OCI-LY7 (cell line): ENCODE measurements at regions of chr5 and their contacts with region 1.

Region 1: DNA sequence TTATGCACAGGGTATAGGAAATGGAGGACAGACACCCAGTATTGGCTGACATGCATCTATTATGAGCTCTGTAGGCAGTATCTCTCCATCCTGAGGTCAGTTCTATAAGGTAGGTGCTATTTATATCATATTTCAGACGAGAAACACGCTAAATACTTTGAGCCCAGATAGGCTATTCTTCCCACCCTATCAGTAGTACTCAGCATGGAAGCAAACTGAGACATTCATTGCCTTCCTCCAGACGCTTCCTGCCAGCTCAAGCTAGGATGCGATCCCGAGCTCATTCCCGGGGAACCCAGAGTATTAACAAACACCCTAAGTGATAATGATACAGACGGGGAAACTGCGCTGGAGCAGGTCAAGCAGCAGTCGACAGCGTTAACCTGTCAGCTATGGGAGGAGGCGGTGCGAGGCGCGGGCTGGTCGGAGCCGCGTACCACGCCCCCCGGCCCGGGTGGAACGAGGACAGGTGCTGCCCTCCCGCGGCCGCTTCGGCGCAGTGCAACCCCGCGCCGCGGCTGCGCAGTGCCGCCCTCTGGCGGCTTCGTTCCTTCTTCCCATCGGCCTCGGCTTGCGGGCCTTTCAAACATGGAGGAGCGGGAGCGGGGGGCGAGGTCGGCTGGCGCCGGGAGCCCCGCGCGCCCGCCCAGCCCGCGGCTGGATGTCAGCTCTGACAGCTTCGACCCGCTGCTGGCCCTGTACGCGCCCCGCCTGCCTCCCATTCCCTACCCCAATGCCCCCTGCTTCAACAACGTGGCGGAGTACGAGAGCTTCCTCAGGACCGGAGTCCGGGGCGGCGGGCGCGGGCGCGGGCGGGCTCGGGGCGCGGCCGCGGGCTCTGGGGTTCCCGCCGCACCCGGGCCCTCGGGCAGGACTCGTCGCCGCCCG is at the start of gene LSM11:
- DNase-seq: peak; percentile 91
- H3K4me3 ChIP-seq: peak within 1 kb of the TSS; percentile 98
- H3K27ac ChIP-seq: no peak within 1 kb of the TSS
- H3K4me1 ChIP-seq: peaks cover 22% of the 10 kb centered on the region
- CTCF ChIP-seq: peak; percentile 98
- total RNA-seq, gene LSM11: 7.5 and 8.8 TPM in 2 replicates

Region 2: DNA sequence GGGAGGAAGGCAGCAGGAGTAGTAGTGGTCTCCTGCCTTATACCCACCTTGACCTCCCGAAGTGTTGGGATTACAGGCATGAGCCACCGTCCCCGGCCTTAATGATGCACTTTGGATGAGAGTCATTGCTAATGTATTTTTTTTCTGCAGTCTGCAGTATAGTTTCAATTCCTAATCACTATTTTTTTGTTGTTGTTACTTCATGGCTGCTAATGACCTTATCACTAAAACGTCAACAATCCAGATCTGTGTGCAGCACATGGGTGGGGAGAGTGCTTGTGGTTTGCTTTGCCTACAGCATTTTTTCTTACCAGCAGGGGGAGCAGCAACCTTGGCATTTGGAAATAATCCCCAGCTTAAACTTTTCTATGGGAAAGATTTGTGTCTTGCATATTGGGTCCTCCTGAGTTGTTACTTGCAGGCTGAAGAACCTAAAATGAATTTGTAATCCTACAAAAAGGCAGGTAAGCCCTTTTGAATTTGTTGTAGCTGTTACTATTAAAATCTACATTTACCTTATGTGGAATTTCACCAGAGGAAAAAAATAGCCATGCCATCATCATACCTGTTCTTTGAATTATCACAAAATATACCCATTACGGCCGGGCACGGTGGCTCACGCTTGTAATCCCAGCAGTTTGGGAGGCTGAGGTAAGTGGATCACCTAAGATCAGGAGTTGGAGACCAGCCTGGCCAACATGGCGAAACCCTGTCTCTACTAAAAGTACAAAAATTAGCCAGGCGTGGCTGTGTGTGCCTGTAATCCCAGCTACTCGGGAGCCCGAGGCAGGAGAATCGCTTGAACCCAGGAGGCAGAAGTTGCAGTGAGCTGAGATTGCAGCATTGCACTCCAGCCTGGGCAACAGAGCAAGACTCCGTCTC is 594.4 kb before region 1 on chr5:
- CTCF ChIA-PET with region 1: no interaction called
- POLR2A ChIA-PET with region 1: no interaction called
- intact Hi-C with region 1: loop called (anchors 2 kb)
- DNase-seq: peak; percentile 78
- H3K4me3 ChIP-seq: no peak overlapping the region
- H3K27ac ChIP-seq: no peak overlapping the region
- H3K4me1 ChIP-seq: no peaks in the 10 kb centered on the region
- CTCF ChIP-seq: peak; percentile 98

Region 3: DNA sequence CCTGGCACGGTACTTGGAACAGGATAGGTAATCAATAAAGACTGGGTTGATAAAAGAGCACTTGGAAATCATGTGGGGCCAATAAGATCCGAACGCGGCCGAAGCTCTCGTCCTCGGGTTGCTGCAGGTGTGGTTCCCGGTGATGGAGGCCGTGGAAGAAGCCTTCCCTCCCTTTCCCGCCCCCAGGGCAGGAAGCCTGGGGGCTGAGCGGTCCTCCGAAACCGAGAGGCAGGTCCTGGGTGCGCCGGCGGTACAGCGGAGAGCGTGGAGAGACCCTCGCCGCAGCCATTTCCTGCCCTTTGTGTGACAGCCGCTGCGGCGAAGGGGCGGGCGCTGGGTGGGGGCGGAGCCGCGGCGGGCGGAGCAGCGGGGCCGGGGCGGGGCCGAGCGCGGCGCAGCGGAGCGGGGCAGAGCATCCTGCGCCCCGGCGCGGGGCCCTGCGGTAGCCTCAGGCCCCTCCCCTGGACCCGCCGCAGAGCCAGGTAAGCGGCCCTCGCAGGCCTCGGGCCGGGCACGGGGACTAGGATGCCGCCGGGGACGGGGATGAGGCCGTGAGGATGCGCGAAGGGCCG is 477.6 kb before region 1 on chr5 and contains the start of gene CYFIP2:
- CTCF ChIA-PET with region 1: no interaction called
- POLR2A ChIA-PET with region 1: no interaction called
- intact Hi-C with region 1: no loop called
- DNase-seq: peak; percentile 91
- H3K4me3 ChIP-seq: peak within 1 kb of the TSS; percentile 82
- H3K27ac ChIP-seq: peak within 1 kb of the TSS; percentile 98
- H3K4me1 ChIP-seq: peaks cover 63% of the 10 kb centered on the region
- CTCF ChIP-seq: no peak
- total RNA-seq, gene CYFIP2: 221 and 258 TPM in 2 replicates

Region 4: GRCh38 chr5:157328277-157328912 is 415.0 kb before region 1 on chr5:
- CTCF ChIA-PET with region 1: interaction called, 3 read pairs
- POLR2A ChIA-PET with region 1: no interaction called
- intact Hi-C with region 1: loop called (anchors 1 kb)
- DNase-seq: peak; percentile 73
- H3K4me3 ChIP-seq: no peak overlapping the region
- H3K27ac ChIP-seq: no peak overlapping the region
- H3K4me1 ChIP-seq: no peaks in the 10 kb centered on the region
- CTCF ChIP-seq: peak; percentile 88

Region 5: GRCh38 chr5:157603333-157604190 is 139.8 kb before region 1 on chr5:
- CTCF ChIA-PET with region 1: no interaction called
- POLR2A ChIA-PET with region 1: interaction called, 3 read pairs
- intact Hi-C with region 1: loop called (anchors 5 kb)
- DNase-seq: peak; percentile 37
- H3K4me3 ChIP-seq: no peak overlapping the region
- H3K27ac ChIP-seq: peak overlapping the region; percentile 73
- H3K4me1 ChIP-seq: peaks cover 66% of the 10 kb centered on the region
- CTCF ChIP-seq: no peak

Region 6: DNA sequence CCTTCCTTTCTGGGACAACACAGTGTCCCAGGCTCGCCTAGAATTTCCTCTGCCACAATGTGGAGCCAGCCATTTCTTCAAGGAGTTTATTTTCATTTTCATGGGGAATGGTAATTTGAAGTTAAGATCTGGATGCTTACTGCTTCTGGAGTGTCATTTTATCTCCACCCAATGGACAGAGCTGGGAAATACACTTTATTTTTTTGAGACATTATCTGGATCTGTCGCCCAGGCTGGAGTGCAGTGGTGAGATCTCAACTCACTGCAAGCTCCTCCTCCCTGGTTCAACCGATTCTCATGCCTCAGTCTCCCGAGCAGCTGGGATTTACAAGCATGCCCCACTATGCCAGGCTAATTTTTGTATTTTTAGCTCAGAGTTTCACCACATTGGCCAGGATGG is 24.9 kb before region 1 on chr5:
- CTCF ChIA-PET with region 1: interaction called, 4 read pairs
- POLR2A ChIA-PET with region 1: interaction called, 5 read pairs
- intact Hi-C with region 1: loop called (anchors 1 kb)
- DNase-seq: peak; percentile 70
- H3K4me3 ChIP-seq: no peak overlapping the region
- H3K27ac ChIP-seq: no peak overlapping the region
- H3K4me1 ChIP-seq: peaks cover 19% of the 10 kb centered on the region
- CTCF ChIP-seq: peak; percentile 82

Region 7: DNA sequence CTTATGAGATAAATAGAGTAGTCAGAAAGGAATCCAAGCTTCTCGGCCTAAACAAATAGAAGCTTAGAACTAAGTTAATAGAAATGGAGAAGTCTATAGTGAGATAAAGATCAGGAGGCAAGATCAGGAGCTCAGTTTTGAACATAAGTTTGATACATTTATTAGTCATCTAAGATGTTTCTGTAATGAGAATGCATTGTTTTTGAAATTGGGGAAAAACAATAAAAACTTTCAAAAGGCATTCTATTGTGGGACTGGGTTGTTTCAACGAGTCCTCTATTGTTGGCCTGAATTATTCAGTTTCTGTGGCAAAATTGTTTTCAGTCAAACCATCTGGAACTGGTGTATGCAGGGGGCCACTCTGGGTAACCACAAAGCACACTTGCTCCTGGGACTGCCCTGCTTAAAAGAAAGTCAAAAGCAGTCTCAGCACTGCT is 296.5 kb after region 1 on chr5:
- CTCF ChIA-PET with region 1: no interaction called
- POLR2A ChIA-PET with region 1: no interaction called
- intact Hi-C with region 1: no loop called
- DNase-seq: no peak
- H3K4me3 ChIP-seq: no peak overlapping the region
- H3K27ac ChIP-seq: no peak overlapping the region
- H3K4me1 ChIP-seq: no peaks in the 10 kb centered on the region
- CTCF ChIP-seq: no peak